Activated B cell treated with CpG ODN at 0.5 μM for 24 hours (primary cell): ENCODE measurements at regions of chr1 and their contacts with region 1.

Region 1: DNA sequence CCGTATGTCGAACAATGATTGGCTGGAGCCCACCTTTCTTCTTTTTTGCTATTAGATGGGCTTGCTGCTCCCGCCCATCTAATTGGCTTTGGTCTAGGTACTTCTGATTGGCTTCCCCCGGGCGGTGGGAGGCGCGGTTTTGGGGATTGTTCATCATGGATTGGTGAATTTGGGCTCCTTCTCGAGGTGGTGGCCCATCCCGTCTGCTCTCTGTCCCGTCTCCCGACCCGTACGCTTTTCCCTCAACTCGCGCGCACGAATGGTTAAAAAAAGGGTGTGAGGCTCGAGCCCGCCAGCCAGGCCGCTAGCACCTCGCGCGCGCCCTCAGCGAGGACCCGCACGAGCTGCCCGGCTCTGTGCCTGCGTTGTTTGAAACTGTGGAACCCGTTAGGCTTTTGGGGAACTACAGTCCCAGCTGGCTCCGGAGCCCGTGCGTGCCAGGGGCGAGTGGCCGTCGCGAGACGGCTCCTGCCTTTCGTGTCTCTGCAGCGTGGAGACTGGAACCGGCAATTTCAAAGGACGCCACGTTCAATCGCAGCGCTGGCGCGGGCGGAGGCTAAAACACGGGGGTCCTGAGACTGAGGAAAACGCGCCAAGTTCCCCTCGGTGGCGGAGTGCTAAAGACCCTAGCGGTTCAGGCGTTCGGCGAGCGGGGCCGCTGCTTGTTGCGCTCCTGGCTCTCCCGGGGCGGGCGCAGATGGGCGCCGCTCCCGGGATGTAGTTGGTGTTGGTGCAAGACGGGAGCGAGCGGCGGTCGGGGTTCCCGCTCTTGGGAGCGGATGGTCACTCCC is at the start of gene USP1:
- DNase-seq: peak; percentile 86
- ATAC-seq: peak; percentile 82
- H3K4me3 Mint-ChIP-seq: peak within 1 kb of the TSS; percentile 96
- H3K27ac Mint-ChIP-seq: peak within 1 kb of the TSS; percentile 99
- H3K4me1 Mint-ChIP-seq: peaks cover 57% of the 10 kb centered on the region
- H3K27me3 Mint-ChIP-seq: no peaks in the 10 kb centered on the region
- CTCF ChIP-seq: no peak
- total RNA-seq, gene USP1: 32.1 and 33.3 TPM in 2 replicates

Region 2: GRCh38 chr1:61724813-61725694 is 711.6 kb before region 1 on chr1 and contains the start of gene TM2D1:
- CTCF ChIA-PET with region 1: no interaction called
- POLR2A ChIA-PET with region 1: interaction called, 5 read pairs
- intact Hi-C with region 1: loop called (anchors 2 kb)
- DNase-seq: peak; percentile 81
- ATAC-seq: peak; percentile 97
- H3K4me3 Mint-ChIP-seq: peak within 1 kb of the TSS; percentile 99
- H3K27ac Mint-ChIP-seq: peak within 1 kb of the TSS; percentile 98
- H3K4me1 Mint-ChIP-seq: peaks cover 20% of the 10 kb centered on the region
- H3K27me3 Mint-ChIP-seq: no peaks in the 10 kb centered on the region
- CTCF ChIP-seq: no peak
- total RNA-seq, gene TM2D1: 33.6 and 41.4 TPM in 2 replicates

Region 3: GRCh38 chr1:61869691-61870109 is 567.0 kb before region 1 on chr1:
- CTCF ChIA-PET with region 1: no interaction called
- POLR2A ChIA-PET with region 1: no interaction called
- intact Hi-C with region 1: no loop called
- DNase-seq: no peak
- ATAC-seq: no peak
- H3K4me3 Mint-ChIP-seq: no peak overlapping the region
- H3K27ac Mint-ChIP-seq: no peak overlapping the region
- H3K4me1 Mint-ChIP-seq: peaks cover 3% of the 10 kb centered on the region
- H3K27me3 Mint-ChIP-seq: no peaks in the 10 kb centered on the region
- CTCF ChIP-seq: no peak

Region 4: DNA sequence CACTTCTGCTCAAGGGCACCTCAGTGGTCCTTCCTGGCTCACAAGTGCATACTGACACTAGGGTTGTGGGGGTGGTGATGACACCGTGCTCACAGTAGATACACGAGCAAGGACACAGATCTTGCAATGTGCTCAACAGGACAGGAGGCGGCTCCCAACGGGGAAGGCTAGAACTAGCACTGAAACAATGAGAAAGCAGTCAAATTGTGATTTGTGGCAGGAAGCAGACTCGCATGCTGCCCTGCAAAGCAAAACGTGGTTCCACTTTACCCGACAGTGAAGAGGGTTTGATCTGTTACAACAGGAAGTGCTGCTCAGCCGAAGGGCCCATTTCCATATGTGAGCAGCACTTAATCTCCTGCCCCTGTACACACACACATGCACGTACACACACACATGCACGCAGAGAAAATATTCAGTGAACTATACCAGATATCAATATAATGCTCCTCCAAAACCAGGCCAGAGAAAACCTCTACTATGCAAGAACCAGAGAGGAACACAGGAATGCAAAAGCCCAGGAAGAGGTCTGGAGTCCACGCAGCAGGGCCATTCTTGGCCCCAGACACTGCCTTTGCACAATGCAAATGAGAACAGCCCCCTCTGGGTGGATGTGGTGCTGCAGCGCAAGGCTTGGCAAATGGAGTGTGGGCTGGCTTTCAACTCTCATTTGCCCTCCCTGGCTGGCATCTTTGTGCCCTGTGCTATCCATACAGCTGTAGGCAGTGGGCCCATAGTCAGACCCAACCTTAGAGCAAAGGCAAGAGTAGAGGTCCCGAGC is 164.5 kb before region 1 on chr1:
- CTCF ChIA-PET with region 1: no interaction called
- POLR2A ChIA-PET with region 1: no interaction called
- intact Hi-C with region 1: no loop called
- DNase-seq: no peak
- ATAC-seq: peak; percentile 67
- H3K4me3 Mint-ChIP-seq: peak overlapping the region; percentile 12
- H3K27ac Mint-ChIP-seq: peak overlapping the region; percentile 19
- H3K4me1 Mint-ChIP-seq: peaks cover 15% of the 10 kb centered on the region
- H3K27me3 Mint-ChIP-seq: no peaks in the 10 kb centered on the region
- CTCF ChIP-seq: no peak

Region 5: GRCh38 chr1:62417361-62417999 is 19.2 kb before region 1 on chr1:
- CTCF ChIA-PET with region 1: no interaction called
- POLR2A ChIA-PET with region 1: no interaction called
- intact Hi-C with region 1: no loop called
- DNase-seq: no peak
- ATAC-seq: no peak
- H3K4me3 Mint-ChIP-seq: no peak overlapping the region
- H3K27ac Mint-ChIP-seq: no peak overlapping the region
- H3K4me1 Mint-ChIP-seq: no peaks in the 10 kb centered on the region
- H3K27me3 Mint-ChIP-seq: no peaks in the 10 kb centered on the region
- CTCF ChIP-seq: no peak

Region 6: GRCh38 chr1:62613325-62613727 is 176.7 kb after region 1 on chr1:
- CTCF ChIA-PET with region 1: no interaction called
- POLR2A ChIA-PET with region 1: interaction called, 3 read pairs
- intact Hi-C with region 1: loop called (anchors 5 kb)
- DNase-seq: no peak
- ATAC-seq: peak; percentile 72
- H3K4me3 Mint-ChIP-seq: peak overlapping the region; percentile 74
- H3K27ac Mint-ChIP-seq: peak overlapping the region; percentile 12
- H3K4me1 Mint-ChIP-seq: peaks cover 20% of the 10 kb centered on the region
- H3K27me3 Mint-ChIP-seq: no peaks in the 10 kb centered on the region
- CTCF ChIP-seq: no peak

Region 7: GRCh38 chr1:62783723-62784508 is 347.3 kb after region 1 on chr1 and contains the start of gene ATG4C:
- CTCF ChIA-PET with region 1: no interaction called
- POLR2A ChIA-PET with region 1: interaction called, 5 read pairs
- intact Hi-C with region 1: loop called (anchors 1 kb)
- DNase-seq: peak; percentile 79
- ATAC-seq: peak; percentile 94
- H3K4me3 Mint-ChIP-seq: no peak within 1 kb of the TSS
- H3K27ac Mint-ChIP-seq: no peak within 1 kb of the TSS
- H3K4me1 Mint-ChIP-seq: peaks cover 20% of the 10 kb centered on the region
- H3K27me3 Mint-ChIP-seq: no peaks in the 10 kb centered on the region
- CTCF ChIP-seq: no peak
- total RNA-seq, gene ATG4C: 24.2 and 28.4 TPM in 2 replicates

Region 8: DNA sequence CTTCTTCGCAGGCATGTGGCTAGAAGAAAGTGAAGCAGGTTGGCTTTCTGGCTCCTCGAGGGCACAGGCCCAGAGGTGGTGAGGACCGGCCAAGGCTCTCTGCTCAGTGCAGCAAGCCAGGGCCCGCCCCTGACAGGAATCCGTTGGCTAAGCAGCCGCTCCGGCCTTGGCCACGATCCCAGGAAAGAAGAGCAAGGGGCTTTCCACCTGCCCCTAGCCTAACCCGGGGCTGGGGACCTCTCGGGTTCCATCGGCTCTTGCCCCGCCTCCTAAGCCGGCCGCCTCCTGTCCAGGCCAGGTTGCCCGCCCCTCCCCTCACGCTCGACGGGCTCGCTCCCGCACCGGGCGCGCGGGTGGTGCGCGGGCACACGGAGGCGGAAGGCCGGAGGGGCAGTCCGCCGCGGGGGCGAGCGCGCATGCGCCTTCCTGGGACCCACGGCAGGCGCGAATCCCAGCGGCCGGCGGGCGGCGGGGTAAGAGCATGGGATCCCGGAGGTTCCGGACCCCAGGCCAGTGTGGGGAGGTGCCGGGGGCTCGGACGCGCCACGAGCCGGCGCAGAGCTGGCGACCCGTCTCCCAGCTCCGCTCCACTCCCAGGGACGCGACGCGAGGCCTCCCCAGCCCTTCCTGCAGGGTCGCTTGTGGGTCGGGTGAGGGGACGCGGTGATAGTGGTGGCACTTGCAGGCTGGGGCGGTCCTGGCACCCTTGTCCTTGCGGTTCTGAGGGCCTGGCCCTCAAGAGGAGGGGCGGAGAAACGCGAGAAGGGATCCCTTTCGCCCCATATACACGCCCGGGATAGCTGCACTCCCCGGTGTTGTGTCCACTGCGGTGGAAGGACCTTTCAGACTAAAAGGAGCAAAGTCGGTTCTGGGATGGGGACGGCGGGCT is 930.8 kb after region 1 on chr1 and contains the start of gene ALG6:
- CTCF ChIA-PET with region 1: no interaction called
- POLR2A ChIA-PET with region 1: no interaction called
- intact Hi-C with region 1: loop called (anchors 2 kb)
- DNase-seq: peak; percentile 100
- ATAC-seq: peak; percentile 92
- H3K4me3 Mint-ChIP-seq: peak within 1 kb of the TSS; percentile 98
- H3K27ac Mint-ChIP-seq: peak within 1 kb of the TSS; percentile 86
- H3K4me1 Mint-ChIP-seq: peaks cover 21% of the 10 kb centered on the region
- H3K27me3 Mint-ChIP-seq: peaks cover 9% of the 10 kb centered on the region
- CTCF ChIP-seq: no peak
- total RNA-seq, gene ALG6: 20.0 and 21.5 TPM in 2 replicates

Region 9: GRCh38 chr1:63593303-63593885 is 1156.7 kb after region 1 on chr1 and contains the start of gene PGM1:
- CTCF ChIA-PET with region 1: no interaction called
- POLR2A ChIA-PET with region 1: no interaction called
- intact Hi-C with region 1: loop called (anchors 5 kb)
- DNase-seq: peak; percentile 67
- ATAC-seq: peak; percentile 79
- H3K4me3 Mint-ChIP-seq: peak within 1 kb of the TSS; percentile 97
- H3K27ac Mint-ChIP-seq: peak within 1 kb of the TSS; percentile 92
- H3K4me1 Mint-ChIP-seq: peaks cover 14% of the 10 kb centered on the region
- H3K27me3 Mint-ChIP-seq: no peaks in the 10 kb centered on the region
- CTCF ChIP-seq: no peak
- total RNA-seq, gene PGM1: 20.6 and 20.8 TPM in 2 replicates